ENCODE measurements at regions of chr6 and their contacts with region 1.

Region 1: DNA sequence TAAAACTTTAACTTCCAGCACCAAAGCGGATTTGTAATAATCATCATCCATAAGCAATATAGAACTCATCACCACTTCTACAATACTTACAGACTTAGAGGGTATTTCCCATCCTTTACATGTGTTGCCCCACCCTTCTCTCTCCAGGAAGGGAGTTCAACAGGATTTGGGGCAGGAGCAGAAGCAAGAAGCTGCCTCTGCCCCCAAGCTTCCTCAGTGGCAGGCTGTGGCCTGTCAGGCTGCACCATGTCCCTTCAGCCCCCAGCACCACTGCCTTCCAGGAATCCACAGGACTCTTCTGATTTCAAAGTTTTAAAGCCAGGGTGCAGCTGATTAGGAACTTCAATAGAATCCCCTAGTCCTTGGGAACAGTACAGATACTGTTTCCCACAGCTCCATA is 36.7 kb upstream of the MCM9 start:
- DNase-seq: no peak
- H3K4me3 ChIP-seq: no peak overlapping the region
- H3K27ac ChIP-seq: no peak overlapping the region
- H3K4me1 ChIP-seq: no peaks in the 10 kb centered on the region
- H3K27me3 ChIP-seq: no peaks in the 10 kb centered on the region
- CTCF ChIP-seq: no peak
- EP300 ChIP-seq: no peak
- POLR2A ChIP-seq: no peak

Region 2: DNA sequence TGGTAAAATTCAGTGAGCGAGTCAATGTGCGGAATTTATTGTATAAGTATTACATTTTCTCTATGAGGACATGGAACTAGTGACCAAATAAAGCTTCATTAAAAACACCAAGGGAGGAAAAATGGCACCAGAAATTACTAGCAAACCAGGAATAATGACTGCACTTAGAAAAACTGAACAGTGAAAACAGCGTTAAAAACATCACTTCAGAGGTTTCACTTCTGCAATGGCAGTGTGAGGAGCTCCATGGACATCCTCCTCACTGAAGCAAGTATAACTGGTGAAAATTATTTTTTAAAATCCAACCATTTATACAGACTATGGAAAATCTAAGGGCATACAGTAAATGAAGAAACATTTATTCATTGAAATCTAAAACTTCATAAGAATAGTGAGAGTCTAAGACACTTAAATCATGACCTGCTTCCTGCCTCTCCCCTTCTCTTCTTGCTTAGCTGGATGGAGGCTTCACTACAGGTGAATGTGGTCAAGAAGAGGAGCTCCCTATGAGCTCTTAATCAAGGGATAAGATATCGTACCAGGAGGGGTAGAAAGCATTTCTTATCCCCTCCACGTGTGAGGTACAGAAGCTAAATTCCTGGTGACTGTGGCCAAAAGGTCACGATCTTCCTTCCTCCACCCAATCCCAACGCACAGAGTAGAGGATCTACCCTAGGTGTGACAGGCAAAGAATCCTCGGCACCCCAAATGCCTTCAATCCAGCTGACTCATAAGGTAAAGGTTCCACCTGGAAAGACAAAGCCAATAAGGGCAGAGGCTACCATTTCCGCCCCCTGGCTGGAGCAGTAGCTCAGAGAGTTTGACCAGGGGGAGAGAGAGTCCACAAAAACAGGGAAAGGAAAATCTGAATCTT is 90.0 kb before region 1 on chr6:
- intact Hi-C with region 1: no loop called
- DNase-seq: no peak
- H3K4me3 ChIP-seq: no peak overlapping the region
- H3K27ac ChIP-seq: no peak overlapping the region
- H3K4me1 ChIP-seq: peaks cover 0 to 22% (median 9%) of the 10 kb centered on the region in 4 donors
- H3K27me3 ChIP-seq: no peaks in the 10 kb centered on the region
- CTCF ChIP-seq: no peak
- EP300 ChIP-seq: no peak
- POLR2A ChIP-seq: no peak

Region 3: DNA sequence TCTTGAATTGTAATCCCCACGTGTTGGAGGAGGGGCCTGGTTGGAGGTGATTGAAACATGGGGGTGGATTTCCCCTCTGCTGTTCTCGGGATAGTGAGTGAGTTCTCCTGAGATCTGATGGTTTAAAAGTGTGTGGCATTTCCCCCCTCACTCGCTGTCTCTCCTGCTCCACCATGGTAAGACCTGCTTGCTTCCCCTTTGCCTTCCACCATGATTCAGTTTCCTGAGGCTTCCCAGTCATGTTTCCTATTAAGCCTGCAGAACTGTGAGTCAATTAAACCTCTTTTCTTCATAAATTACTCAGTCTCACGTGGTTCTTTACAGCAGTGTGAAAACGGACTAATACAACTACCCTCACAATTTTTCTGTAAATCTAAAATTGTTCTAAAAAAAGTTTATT is 133.6 kb after region 1 on chr6:
- intact Hi-C with region 1: loop called (anchors 10 kb)
- DNase-seq: no peak
- H3K4me3 ChIP-seq: no peak overlapping the region
- H3K27ac ChIP-seq: no peak overlapping the region
- H3K4me1 ChIP-seq: peaks cover 0 to 3% (median under 1%) of the 10 kb centered on the region in 4 donors
- H3K27me3 ChIP-seq: no peaks in the 10 kb centered on the region
- CTCF ChIP-seq: no peak
- EP300 ChIP-seq: no peak
- POLR2A ChIP-seq: no peak

Measured in stomach (tissue), 19 donors.